ENCODE measurements at regions of chr5 and their contacts with region 1.

Region 1: GRCh38 chr5:163437309-163438182 is at the start of gene CCNG1:
- DNase-seq: peak; percentile 90 to 96
- ATAC-seq: peak; percentile 96 to 99 (median 98)
- H3K4me3 ChIP-seq: peak within 1 kb of the TSS; percentile 78 to 99 (median 94)
- H3K27ac ChIP-seq: peak within 1 kb of the TSS; percentile 59 to 97 (median 92)
- H3K4me1 ChIP-seq: peaks cover 15 to 44% (median 32%) of the 10 kb centered on the region in 9 donors
- H3K27me3 ChIP-seq: no peaks in the 10 kb centered on the region
- CTCF ChIP-seq: peak in 1 of 9 donors; percentile 1
- total RNA-seq, gene CCNG1: 47.1 to 137 (median 70.4) TPM

Region 2: DNA sequence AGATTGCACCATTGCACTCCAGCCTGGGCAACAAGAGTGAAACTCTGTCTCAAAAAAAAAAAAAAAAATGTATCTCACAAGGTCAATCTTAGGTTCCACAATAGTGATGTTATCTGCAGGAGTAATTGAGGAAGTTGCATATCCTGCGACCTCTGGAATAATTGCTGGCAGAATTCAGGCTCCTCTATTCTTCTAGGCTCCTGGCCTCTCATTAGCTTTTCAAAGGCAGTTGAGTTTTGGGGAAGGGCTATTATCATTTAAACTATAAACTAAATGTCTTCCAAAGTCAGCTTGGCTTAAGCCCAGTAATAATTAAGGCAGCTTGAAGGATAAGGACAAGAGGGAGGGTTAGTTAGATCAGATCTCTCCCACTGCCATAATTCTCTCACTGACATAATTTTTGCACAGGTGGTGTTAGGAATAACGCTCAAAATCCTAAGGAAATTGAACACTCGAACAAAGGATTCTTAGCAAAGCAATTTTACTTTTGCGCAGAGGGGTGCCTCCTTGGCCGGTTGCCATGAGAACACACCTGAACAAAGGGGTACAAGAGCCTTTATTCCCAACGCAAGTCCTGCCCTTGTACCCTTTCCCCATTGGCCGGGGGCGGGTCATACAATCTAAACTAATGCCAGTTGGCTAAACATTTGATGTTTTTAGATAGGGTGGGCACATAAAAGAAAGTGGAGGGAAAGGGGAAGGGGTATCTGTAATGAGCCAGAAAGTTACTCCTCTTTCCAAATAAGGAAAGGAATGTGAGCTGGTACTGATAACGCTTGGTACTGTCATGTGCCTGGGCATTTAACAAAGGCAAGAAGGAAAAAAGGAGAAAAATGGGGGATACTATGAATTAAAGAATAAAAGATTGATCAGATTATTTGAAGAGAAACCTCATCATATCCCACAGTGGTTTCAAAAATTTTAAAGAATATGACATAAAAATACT is 106.5 kb before region 1 on chr5:
- intact Hi-C with region 1: no loop called
- DNase-seq: no peak
- ATAC-seq: no peak
- H3K4me3 ChIP-seq: no peak overlapping the region
- H3K27ac ChIP-seq: no peak overlapping the region
- H3K4me1 ChIP-seq: no peaks in the 10 kb centered on the region
- H3K27me3 ChIP-seq: no peaks in the 10 kb centered on the region
- CTCF ChIP-seq: no peak

Region 3: DNA sequence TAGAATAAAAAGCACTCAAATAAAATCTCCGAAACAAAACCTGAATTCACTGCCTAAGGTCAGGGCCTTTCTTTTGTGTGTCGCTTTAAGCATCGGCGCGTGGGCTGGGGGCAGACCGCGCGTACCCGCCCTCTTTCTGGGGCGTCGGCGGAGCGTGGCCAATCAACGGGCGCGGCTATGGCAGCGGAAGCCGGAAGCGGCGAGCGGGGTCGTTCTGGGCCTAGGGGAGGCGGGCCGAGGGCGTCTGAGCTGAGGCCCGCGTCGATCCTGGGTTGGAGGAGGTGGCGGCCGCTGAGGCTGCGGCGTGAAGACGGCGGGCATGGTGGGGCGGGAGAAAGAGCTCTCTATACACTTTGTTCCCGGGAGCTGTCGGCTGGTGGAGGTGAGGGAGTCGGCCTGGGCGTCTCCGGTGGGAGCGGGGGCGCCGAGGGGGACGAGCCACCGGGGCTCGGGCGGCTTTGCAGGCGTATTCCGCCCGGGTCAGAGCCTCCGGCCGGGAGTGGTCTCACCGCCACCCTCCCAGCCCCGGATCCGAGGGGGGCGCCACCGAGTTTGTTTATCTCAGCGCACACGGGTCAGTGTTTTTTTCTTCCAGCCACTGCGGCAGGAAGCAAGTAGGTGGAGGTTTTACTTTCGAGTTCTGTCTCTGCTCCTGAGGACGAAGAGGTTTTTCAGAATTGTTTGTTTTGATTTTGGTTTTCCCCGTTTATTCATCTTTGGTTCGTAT is 68.0 kb after region 1 on chr5 and contains the start of gene MAT2B:
- intact Hi-C with region 1: loop called in 3 of 10 experiments (anchors 2 to 10 kb)
- DNase-seq: peak; percentile 96 to 97
- ATAC-seq: peak; percentile 97 to 99 (median 98)
- H3K4me3 ChIP-seq: peak within 1 kb of the TSS; percentile 59 to 90 (median 82)
- H3K27ac ChIP-seq: peak within 1 kb of the TSS; percentile 88 to 99 (median 94)
- H3K4me1 ChIP-seq: peaks cover 6 to 65% (median 42%) of the 10 kb centered on the region in 9 donors
- H3K27me3 ChIP-seq: no peaks in the 10 kb centered on the region
- CTCF ChIP-seq: peak; percentile 12 to 77 (median 48)
- total RNA-seq, gene MAT2B: 48.4 to 63.2 (median 56.9) TPM

Region 4: DNA sequence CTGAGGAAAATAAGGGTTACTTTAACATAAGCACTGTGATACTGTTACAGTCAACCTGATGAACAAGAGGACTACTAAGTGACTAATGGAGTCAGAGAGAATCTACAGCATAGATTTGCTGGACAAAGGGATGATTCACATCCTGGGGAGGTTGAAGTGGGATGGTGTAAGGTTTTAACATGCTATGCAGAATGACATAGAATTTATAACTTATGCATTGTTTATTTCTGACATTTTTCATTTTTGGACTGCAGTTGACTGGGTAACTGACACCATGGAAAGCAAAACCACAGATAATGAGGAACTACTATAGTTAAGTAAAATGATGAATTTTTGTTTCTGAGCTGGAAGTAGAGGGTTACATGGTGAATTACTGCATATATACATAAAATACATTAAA is 457.1 kb after region 1 on chr5:
- intact Hi-C with region 1: no loop called
- DNase-seq: no peak
- ATAC-seq: no peak
- H3K4me3 ChIP-seq: no peak overlapping the region
- H3K27ac ChIP-seq: no peak overlapping the region
- H3K4me1 ChIP-seq: no peaks in the 10 kb centered on the region
- H3K27me3 ChIP-seq: no peaks in the 10 kb centered on the region
- CTCF ChIP-seq: no peak

Measured in heart right ventricle (tissue), 16 donors.